Right ventricle myocardium superior (tissue), 1 donor: ENCODE measurements at regions of chr10 and their contacts with region 1.

Region 1: DNA sequence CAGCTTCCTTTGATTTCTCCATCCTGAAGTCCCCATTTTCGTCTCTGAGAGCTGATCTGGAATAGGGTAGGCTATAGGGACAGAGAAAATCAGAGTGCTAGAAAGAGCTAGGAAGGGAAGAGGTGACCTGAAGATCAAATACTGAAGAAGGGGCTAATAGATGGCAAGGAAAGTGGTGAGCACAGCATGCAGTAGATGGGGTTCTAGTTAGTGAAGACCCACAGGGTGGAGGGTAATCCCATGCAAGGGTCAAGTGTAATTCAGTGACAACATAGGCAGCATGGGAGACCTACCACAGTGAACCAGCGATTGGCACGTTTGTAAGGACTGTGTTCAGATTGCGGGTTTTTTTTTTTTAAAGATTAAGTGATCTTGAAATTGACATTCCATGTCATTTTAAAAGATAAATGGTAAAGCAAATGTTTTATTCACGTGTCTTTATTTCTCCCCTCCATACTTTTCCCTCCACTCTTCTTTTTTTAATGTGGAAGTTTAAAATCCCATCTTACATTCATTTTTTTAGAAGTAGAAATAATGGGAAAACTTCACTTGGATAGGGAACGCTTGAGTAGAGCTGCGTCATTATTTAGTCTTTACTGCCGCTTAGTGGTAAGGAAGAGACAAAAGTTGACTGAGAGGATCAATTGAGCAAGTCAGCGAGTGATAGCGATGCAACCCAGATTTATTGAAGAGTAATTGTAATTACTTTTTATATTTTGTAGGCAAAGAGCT is 21.0 kb upstream of the ABI1 start:
- DNase-seq: no peak
- ATAC-seq: peak; percentile 86

Region 2: GRCh38 chr10:26682931-26683330 is 198.8 kb before region 1 on chr10:
- intact Hi-C with region 1: loop called (anchors 5 kb)
- DNase-seq: no peak
- ATAC-seq: no peak

Region 3: DNA sequence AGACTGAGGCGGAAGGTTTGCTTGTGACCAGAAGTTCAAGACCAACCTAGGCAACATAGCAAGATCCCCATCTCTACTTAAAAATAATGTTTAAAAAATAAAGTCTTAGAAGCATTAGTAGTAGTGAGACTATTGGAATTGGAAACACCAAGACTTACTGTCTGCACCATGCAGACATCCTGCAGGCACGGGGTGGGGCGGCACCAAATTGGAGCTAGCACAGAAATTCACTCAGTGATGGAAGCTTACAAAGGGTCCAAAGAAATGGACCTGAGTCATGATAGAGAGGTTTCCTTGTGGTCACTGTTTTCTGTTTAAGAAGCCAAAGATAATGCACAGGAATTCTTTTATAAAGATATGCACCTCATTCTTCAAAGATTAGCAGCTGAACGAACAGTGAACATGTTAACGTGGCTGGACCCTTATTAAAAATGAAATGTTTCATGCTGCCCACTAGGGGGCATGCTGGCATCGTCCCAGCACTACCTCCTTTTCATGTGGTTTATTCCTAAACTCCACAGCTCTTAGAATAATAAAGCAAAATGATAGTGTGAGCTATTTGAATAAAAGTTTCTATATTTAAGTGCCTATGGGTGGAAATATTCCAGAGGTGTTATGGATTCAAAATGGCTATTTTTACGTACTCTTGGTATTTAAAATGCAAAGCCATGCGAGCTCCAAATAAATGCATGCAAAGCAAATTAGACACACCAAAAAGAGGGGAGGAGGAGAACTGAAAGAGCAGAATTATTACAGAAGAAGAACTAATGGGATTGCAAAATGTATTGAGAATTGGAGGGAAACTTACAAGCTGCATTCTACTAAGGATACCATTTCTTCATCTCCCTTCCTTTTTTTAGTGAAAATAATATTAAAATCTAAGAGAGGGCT is 155.7 kb before region 1 on chr10:
- intact Hi-C with region 1: loop called (anchors 5 kb)
- DNase-seq: peak; percentile 64
- ATAC-seq: peak; percentile 72